B cell (primary cell): ENCODE measurements at regions of chr11 and their contacts with region 1.

Region 1: DNA sequence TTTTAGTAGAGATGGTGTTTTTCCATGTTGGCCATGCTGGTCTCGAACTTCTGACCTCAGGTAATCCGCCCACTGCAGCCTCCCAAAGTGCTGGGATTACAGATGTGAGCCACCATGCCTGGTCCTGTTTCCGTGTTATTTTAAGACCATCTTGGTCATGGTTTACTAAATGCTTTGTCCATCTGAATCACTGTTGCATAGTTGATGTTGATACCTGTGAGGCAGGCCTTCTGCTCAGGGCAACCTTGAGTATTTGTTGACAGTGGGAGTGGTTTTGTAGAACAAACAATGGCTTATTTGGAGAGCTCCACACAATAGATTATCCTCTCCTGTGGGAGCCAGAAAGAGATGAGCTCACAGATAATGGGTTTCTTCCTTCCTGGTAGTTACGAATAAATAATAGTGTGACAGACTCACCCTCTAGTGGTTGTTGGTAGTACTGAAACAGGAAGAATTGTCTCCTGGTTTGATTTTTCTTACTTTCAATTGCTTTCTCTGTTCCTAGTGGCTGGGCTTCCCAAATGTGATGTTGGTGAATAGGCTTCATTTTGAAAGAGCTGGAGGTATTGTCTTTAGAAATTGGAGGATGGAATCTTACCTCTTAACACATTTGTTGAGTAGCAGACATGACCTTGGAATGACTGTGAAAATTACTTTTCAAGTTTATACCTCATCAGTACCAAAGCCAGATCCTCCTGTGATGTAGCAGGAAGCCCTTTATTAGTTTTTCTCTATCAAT is 39.0 kb downstream of the CTNND1 start:
- DNase-seq: peak; percentile 81
- ATAC-seq: peak; percentile 90
- H3K4me3 ChIP-seq: no peak overlapping the region
- H3K4me3 Mint-ChIP-seq: peak overlapping the region; percentile 38
- H3K27ac ChIP-seq: peak overlapping the region; percentile 39 to 90
- H3K27ac Mint-ChIP-seq: peak overlapping the region; percentile 91
- H3K4me1 ChIP-seq: peaks cover 28 to 30% of the 10 kb centered on the region in 2 donors
- H3K4me1 Mint-ChIP-seq: peaks cover 36% of the 10 kb centered on the region
- H3K27me3 ChIP-seq: no peaks in the 10 kb centered on the region
- H3K27me3 Mint-ChIP-seq: no peaks in the 10 kb centered on the region
- CTCF ChIP-seq: peak; percentile 92

Region 2: DNA sequence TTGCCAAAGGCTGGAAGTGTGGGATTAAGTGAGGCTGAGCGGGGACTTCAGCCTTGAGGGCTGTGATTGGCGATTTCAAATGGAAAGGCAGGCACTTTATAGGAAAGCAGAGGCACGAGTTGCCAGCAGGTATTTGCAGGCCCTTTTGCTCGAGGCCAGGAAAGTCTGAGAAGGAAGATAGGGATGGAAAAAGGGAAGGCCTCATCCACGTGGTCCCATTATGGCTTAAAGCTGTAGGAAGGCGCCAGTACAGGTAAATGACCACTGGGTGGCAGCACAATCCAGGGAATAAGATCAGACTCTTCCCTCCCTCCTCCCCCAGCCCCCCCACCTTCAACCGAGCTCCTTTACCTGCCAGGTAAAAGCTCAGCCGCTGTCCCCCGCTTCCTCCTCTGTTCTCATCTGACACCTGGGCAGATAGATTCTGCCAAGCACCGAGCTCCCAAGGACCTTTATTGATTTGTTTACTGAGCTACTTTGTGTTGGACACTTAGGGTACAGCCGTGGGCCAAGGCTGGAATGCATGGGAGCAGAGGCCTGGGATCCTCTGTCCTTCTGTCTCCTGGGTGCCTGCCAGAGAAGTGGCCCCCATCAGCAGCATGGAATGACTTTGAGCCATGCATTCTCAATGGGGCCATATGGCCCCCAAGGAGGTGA is 454.9 kb before region 1 on chr11:
- CTCF ChIA-PET with region 1: interaction called, 8 read pairs
- POLR2A ChIA-PET with region 1: no interaction called
- intact Hi-C with region 1: loop called (anchors 5 kb)
- DNase-seq: peak; percentile 78
- ATAC-seq: peak; percentile 82
- H3K4me3 ChIP-seq: no peak overlapping the region
- H3K4me3 Mint-ChIP-seq: no peak overlapping the region
- H3K27ac ChIP-seq: no peak overlapping the region
- H3K27ac Mint-ChIP-seq: no peak overlapping the region
- H3K4me1 ChIP-seq: peaks cover 0 to 6% of the 10 kb centered on the region in 2 donors
- H3K4me1 Mint-ChIP-seq: peaks cover 6% of the 10 kb centered on the region
- H3K27me3 ChIP-seq: no peaks in the 10 kb centered on the region
- H3K27me3 Mint-ChIP-seq: peaks cover 8% of the 10 kb centered on the region
- CTCF ChIP-seq: peak; percentile 82

Region 3: GRCh38 chr11:57638005-57638781 is 162.4 kb before region 1 on chr11:
- CTCF ChIA-PET with region 1: interaction called, 68 read pairs
- POLR2A ChIA-PET with region 1: no interaction called
- intact Hi-C with region 1: no loop called
- DNase-seq: peak; percentile 47
- ATAC-seq: peak; percentile 25
- H3K4me3 ChIP-seq: peak overlapping the region; percentile 52 to 81 (median 67)
- H3K4me3 Mint-ChIP-seq: peak overlapping the region; percentile 89
- H3K27ac ChIP-seq: peak overlapping the region in 1 of 2 donors; percentile 58
- H3K27ac Mint-ChIP-seq: peak overlapping the region; percentile 53
- H3K4me1 ChIP-seq: peaks cover 20 to 24% of the 10 kb centered on the region in 2 donors
- H3K4me1 Mint-ChIP-seq: peaks cover 21% of the 10 kb centered on the region
- H3K27me3 ChIP-seq: peaks cover 0 to 57% (median 14%) of the 10 kb centered on the region in 4 experiments
- H3K27me3 Mint-ChIP-seq: peaks cover 55% of the 10 kb centered on the region
- CTCF ChIP-seq: no peak

Region 4: DNA sequence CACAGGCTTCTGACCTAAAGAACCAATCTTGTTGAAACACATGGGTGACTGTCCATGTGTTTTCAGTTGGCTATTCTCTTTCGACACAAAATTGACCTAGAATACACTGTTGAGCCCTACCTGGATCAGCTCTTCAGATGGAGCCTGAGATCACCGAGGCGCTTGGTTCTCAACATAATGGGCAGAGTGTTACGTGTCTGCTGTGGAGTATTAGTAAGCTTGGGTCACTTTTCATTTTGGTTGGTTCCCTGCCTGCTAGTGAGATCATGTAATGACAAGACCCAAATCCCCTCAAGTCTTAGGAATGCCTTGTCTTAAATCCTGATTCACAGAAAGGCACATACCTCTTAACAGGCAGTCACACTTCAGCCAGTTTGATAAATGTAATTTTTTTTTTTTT is 97.3 kb before region 1 on chr11:
- CTCF ChIA-PET with region 1: interaction called, 19 read pairs
- POLR2A ChIA-PET with region 1: no interaction called
- intact Hi-C with region 1: no loop called
- DNase-seq: no peak
- ATAC-seq: no peak
- H3K4me3 ChIP-seq: no peak overlapping the region
- H3K4me3 Mint-ChIP-seq: no peak overlapping the region
- H3K27ac ChIP-seq: no peak overlapping the region
- H3K27ac Mint-ChIP-seq: no peak overlapping the region
- H3K4me1 ChIP-seq: no peaks in the 10 kb centered on the region
- H3K4me1 Mint-ChIP-seq: peaks cover 4% of the 10 kb centered on the region
- H3K27me3 ChIP-seq: no peaks in the 10 kb centered on the region
- H3K27me3 Mint-ChIP-seq: no peaks in the 10 kb centered on the region
- CTCF ChIP-seq: no peak

Region 5: DNA sequence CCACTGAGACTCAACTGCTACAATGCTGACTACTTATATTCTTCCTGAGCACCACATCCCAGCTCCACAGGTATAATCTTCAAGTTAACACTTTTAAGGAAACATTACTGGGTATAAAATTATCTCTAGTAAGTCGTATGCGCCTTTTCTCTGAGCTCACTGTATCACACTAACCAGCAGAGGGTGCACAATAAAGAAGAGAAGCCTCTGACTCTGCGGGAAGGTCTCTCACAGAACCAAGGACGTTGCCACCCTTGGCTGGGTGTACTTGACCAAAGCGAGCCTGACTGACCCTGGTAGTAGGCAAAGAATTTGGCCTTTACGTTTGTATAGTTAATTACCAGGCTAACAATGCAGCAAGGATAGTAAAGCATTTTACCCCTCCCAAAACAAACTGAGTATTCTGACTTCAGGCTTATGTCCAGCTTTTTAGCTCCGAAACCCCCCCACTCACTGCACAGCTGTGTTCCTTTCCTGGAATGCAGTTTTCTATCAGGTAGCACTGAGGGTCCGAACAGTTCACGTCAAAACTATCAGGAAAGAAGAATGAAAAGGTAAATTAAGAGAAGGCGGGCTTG is 48.8 kb before region 1 on chr11 and contains the start of gene BTBD18:
- CTCF ChIA-PET with region 1: interaction called, 180 read pairs
- POLR2A ChIA-PET with region 1: interaction called, 3 read pairs
- intact Hi-C with region 1: loop called (anchors 1 kb)
- DNase-seq: peak; percentile 34
- ATAC-seq: peak; percentile 60
- H3K4me3 ChIP-seq: no peak within 1 kb of the TSS
- H3K4me3 Mint-ChIP-seq: no peak within 1 kb of the TSS
- H3K27ac ChIP-seq: no peak within 1 kb of the TSS
- H3K27ac Mint-ChIP-seq: peak within 1 kb of the TSS; percentile 77
- H3K4me1 ChIP-seq: no peaks in the 10 kb centered on the region
- H3K4me1 Mint-ChIP-seq: peaks cover 11% of the 10 kb centered on the region
- H3K27me3 ChIP-seq: no peaks in the 10 kb centered on the region
- H3K27me3 Mint-ChIP-seq: no peaks in the 10 kb centered on the region
- CTCF ChIP-seq: peak; percentile 44
- total RNA-seq, gene BTBD18: not detected in 2 replicates

Region 6: GRCh38 chr11:57785072-57785471 is 15.5 kb before region 1 on chr11:
- CTCF ChIA-PET with region 1: interaction called, 37 read pairs
- POLR2A ChIA-PET with region 1: interaction called, 5 read pairs
- intact Hi-C with region 1: no loop called
- DNase-seq: peak; percentile 74
- ATAC-seq: peak; percentile 84
- H3K4me3 ChIP-seq: peak overlapping the region in 3 of 5 experiments; percentile 13 to 33 (median 27)
- H3K4me3 Mint-ChIP-seq: peak overlapping the region; percentile 89
- H3K27ac ChIP-seq: peak overlapping the region; percentile 82 to 89
- H3K27ac Mint-ChIP-seq: peak overlapping the region; percentile 93
- H3K4me1 ChIP-seq: peaks cover 58 to 60% of the 10 kb centered on the region in 2 donors
- H3K4me1 Mint-ChIP-seq: peaks cover 52% of the 10 kb centered on the region
- H3K27me3 ChIP-seq: no peaks in the 10 kb centered on the region
- H3K27me3 Mint-ChIP-seq: no peaks in the 10 kb centered on the region
- CTCF ChIP-seq: no peak

Region 7: DNA sequence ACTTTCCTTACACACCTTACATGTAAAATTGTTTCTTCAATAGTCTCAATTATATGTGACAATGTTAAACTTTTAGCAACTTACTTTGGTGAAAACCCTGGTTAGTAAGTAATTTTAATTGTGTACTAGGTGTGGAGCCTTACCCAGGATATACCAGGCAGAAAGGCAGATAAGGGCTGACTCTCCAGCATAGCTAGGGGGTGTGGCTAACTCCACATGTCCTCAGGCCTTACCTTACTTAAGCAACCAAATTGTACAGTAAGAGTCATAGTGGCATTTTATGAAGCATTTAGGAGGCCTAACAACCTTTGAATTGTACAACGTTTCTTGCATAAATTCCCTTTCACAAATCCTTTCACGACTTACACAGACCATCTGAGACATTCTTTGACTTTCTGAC is 104.8 kb after region 1 on chr11:
- CTCF ChIA-PET with region 1: no interaction called
- POLR2A ChIA-PET with region 1: no interaction called
- intact Hi-C with region 1: no loop called
- DNase-seq: no peak
- ATAC-seq: no peak
- H3K4me3 ChIP-seq: no peak overlapping the region
- H3K4me3 Mint-ChIP-seq: no peak overlapping the region
- H3K27ac ChIP-seq: no peak overlapping the region
- H3K27ac Mint-ChIP-seq: no peak overlapping the region
- H3K4me1 ChIP-seq: no peaks in the 10 kb centered on the region
- H3K4me1 Mint-ChIP-seq: no peaks in the 10 kb centered on the region
- H3K27me3 ChIP-seq: peaks cover 0 to 6% (median 0%) of the 10 kb centered on the region in 4 experiments
- H3K27me3 Mint-ChIP-seq: peaks cover 13% of the 10 kb centered on the region
- CTCF ChIP-seq: no peak

Region 8: DNA sequence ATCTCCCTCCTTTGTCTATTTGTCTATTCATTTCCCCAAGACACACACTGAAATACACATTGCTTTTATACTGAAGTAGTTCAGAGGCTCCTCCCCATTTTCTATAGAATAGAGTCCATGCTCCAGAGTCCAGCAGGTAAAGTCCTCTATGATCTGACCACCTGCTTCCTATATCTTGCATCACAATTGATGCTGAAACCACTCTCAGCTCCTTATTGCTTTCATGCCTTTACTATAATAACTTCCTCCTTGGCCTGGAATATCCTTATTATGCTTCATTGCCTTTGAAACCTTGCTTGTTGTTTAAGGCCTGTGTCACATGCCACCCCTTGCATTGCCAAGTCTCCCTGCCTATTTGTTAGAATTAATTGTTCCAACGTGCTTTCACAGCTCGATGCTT is 242.8 kb after region 1 on chr11:
- CTCF ChIA-PET with region 1: no interaction called
- POLR2A ChIA-PET with region 1: no interaction called
- intact Hi-C with region 1: no loop called
- DNase-seq: no peak
- ATAC-seq: no peak
- H3K4me3 ChIP-seq: no peak overlapping the region
- H3K4me3 Mint-ChIP-seq: no peak overlapping the region
- H3K27ac ChIP-seq: no peak overlapping the region
- H3K27ac Mint-ChIP-seq: no peak overlapping the region
- H3K4me1 ChIP-seq: no peaks in the 10 kb centered on the region
- H3K4me1 Mint-ChIP-seq: no peaks in the 10 kb centered on the region
- H3K27me3 ChIP-seq: peaks cover 0 to 5% (median 0%) of the 10 kb centered on the region in 4 experiments
- H3K27me3 Mint-ChIP-seq: peaks cover 9% of the 10 kb centered on the region
- CTCF ChIP-seq: no peak